OCI-LY7 (cell line): ENCODE measurements at regions of chr17 and their contacts with region 1.

Region 1: GRCh38 chr17:59004338-59005111 is 102.2 kb downstream of the TRIM37 start:
- DNase-seq: peak; percentile 70
- H3K4me3 ChIP-seq: no peak overlapping the region
- H3K27ac ChIP-seq: peak overlapping the region; percentile 32
- H3K4me1 ChIP-seq: peaks cover 40% of the 10 kb centered on the region
- CTCF ChIP-seq: peak; percentile 98

Region 2: DNA sequence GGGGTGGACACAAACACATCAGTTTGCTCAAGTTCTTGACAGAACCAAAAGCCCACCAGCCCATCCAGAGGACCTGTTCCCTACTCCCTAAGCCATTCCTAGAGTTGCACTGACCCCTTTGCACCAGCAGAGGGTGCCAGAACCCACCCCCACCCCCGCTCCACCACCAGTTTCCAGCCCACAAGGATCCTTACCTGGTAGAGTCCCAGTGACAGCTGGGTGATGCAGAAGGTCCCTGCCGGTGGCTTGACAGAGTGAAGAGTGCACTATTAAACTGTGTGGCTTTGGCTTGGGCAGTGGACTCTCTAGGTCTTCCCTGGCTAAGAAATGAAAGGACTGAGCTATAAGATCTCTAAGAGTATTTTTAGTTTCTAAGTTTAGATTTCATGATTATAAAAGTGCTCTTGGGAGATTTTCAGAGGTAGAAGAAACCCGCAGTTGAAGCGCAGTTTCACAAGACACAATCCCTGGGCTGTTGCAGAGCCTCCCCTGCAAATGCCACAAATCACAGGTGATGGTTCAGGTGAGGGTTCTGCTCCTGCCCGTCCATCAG is 416.7 kb before region 1 on chr17:
- CTCF ChIA-PET with region 1: no interaction called
- POLR2A ChIA-PET with region 1: interaction called, 4 read pairs
- intact Hi-C with region 1: loop called (anchors 1 kb)
- DNase-seq: peak; percentile 73
- H3K4me3 ChIP-seq: no peak overlapping the region
- H3K27ac ChIP-seq: no peak overlapping the region
- H3K4me1 ChIP-seq: no peaks in the 10 kb centered on the region
- CTCF ChIP-seq: peak; percentile 98

Region 3: DNA sequence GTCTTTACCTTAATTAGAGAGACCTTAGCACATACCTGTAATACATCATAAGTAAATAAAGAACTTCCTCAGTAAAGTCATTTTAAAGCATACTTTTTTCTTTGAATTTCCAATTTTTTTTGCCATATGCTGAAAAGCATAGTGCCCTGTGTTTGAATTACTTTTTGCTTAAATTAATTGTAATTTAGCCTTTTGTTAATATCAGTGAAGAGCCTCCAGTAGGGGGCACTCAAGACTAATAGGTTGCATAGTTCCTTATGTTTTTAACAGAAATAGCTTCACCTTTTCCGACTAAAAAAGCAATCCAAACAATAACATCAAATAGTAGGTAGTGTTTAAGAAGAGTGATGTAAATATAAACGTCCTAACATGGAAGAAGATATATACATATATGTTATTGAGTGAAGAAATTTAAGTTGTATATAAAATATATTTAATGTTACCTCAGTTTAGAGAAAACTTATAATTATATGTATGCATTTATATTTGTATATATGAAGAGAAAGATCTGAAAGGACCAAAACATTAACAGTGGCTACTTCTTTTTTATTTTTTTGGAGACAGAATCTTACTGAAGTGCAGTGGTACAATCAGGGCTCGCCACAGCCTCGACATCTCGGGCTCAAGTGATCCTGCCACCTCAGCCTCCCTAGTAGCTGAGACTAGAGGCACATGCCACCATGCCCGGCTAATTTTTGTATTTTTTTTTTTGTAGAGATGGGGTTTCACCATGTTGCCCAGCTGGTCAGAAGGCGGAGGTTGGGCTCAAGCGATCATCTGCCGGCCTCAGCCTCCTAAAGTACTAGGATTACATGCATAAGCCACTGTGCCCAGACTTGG is 293.4 kb before region 1 on chr17:
- CTCF ChIA-PET with region 1: no interaction called
- POLR2A ChIA-PET with region 1: no interaction called
- intact Hi-C with region 1: loop called (anchors 1 kb)
- DNase-seq: peak; percentile 70
- H3K4me3 ChIP-seq: no peak overlapping the region
- H3K27ac ChIP-seq: no peak overlapping the region
- H3K4me1 ChIP-seq: no peaks in the 10 kb centered on the region
- CTCF ChIP-seq: peak; percentile 99

Region 4: GRCh38 chr17:59027750-59028149 is 23.2 kb after region 1 on chr17:
- CTCF ChIA-PET with region 1: no interaction called
- POLR2A ChIA-PET with region 1: no interaction called
- intact Hi-C with region 1: loop called (anchors 2 kb)
- DNase-seq: no peak
- H3K4me3 ChIP-seq: no peak overlapping the region
- H3K27ac ChIP-seq: no peak overlapping the region
- H3K4me1 ChIP-seq: no peaks in the 10 kb centered on the region
- CTCF ChIP-seq: no peak